ENCODE measurements at regions of chr7 and their contacts with region 1.

Region 1: DNA sequence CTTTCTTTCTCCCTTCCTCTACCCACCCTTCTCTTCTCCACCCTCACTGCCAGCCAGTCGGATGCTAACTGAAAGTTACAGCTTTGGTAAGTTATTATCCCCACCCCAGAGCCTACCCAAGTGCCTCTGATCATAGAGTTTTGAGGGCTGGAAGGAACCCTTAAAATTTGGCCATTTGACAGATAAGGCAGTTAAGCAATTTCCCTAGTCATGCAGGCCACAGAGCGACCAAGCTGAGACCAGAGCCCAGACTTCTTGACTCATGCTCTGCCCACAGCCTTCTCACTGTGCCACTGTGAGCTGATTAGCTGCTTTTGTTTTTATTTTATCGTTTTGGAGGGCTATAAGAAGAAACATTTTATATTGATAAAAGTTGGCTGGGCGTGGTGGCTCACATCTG is 17.2 kb downstream of the SAP25 start:
- DNase-seq: no peak
- ATAC-seq: peak; percentile 72
- H3K4me3 ChIP-seq: no peak overlapping the region
- H3K27ac ChIP-seq: peak overlapping the region in 1 of 2 donors; percentile 41
- H3K4me1 ChIP-seq: peaks cover 0 to 18% of the 10 kb centered on the region in 2 donors
- H3K27me3 ChIP-seq: no peaks in the 10 kb centered on the region
- CTCF ChIP-seq: no peak

Region 2: DNA sequence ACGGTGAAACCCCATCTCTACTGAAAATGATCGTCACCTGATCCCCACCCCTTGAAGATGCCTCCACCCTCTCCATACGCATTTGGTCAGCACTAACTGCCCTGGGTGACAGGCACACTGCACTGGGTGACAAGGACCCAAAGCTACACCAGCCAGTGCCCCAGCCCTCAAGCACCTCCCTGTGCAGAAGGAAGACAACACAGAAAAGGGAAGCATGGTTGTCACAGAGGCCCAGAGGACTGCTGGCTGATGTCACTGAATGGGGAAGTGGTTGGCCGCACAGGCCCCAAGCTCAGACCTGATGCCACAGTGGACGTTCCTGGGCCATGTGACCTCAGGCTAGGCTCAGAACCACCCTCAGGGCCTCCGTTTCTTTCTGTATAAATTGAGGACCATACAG is 187.4 kb before region 1 on chr7:
- intact Hi-C with region 1: no loop called
- DNase-seq: peak in 3 of 4 donors; percentile 21 to 92 (median 91)
- ATAC-seq: peak; percentile 72
- H3K4me3 ChIP-seq: no peak overlapping the region
- H3K27ac ChIP-seq: peak overlapping the region; percentile 75 to 92
- H3K4me1 ChIP-seq: peaks cover 0 to 84% of the 10 kb centered on the region in 2 donors
- H3K27me3 ChIP-seq: no peaks in the 10 kb centered on the region
- CTCF ChIP-seq: no peak

Region 3: GRCh38 chr7:100469227-100470044 is 87.1 kb before region 1 on chr7:
- intact Hi-C with region 1: loop called (anchors 5 kb)
- DNase-seq: peak; percentile 74 to 98 (median 88)
- ATAC-seq: peak; percentile 81
- H3K4me3 ChIP-seq: no peak overlapping the region
- H3K27ac ChIP-seq: no peak overlapping the region
- H3K4me1 ChIP-seq: peaks cover 6 to 53% of the 10 kb centered on the region in 2 donors
- H3K27me3 ChIP-seq: no peaks in the 10 kb centered on the region
- CTCF ChIP-seq: peak; percentile 93 to 98